H1 (cell line): ENCODE measurements at regions of chr10 and their contacts with region 1.

Region 1: GRCh38 chr10:119439922-119440321 is 102.6 kb downstream of the RGS10 start:
- DNase-seq: no peak
- H3K4me3 ChIP-seq: no peak overlapping the region
- H3K27ac ChIP-seq: no peak overlapping the region
- H3K4me1 ChIP-seq: no peaks in the 10 kb centered on the region; a peak in 1 of 7 replicates
- H3K27me3 ChIP-seq: no peaks in the 10 kb centered on the region
- CTCF ChIP-seq: no peak
- EP300 ChIP-seq: no peak
- POLR2A ChIP-seq: no peak
- RAD21 ChIP-seq: no peak

Region 2: DNA sequence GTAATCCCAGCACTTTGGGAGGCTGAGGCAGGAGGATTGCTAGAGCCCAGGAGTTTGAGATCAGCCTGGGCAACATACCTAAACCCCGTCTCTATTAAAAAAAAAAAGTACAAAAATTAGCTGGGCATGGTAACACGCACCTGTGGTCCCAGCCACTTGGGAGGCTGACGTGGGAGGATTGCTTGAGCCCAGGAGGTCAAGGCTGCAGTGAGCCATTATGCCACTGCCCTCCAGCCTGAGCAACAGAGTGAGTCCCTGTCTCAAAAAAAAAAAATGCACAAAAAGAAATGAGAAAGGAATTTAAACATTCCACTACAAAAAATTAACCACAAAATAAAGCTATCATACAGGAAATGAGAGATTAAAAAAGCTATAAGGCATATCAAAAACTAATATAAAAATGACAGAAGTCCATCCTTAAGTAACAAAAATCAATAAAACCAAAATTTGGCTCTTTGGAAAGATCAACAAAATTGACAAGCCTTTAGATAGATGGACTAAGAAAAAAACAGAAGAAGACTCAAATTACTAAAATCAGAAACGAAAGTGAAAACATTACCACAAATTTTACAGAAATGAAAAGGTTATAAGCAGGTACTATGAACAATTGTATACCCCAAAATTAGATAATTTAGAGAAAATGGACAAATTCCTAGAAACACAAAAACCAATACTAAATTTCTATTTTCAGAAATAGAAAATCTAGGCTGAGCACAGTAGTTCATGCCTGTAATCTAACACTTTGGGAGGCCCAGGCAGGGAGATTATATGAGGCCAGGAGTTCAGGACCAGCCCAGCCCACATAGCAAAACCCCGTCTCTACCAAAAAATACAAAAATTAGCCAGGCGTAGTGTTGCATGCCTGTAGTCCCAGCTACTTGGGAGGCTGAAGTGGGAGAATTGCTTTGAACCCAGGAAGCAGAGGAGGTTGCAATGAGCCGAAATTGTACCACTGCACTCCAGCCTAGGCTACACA is 452.8 kb before region 1 on chr10:
- CTCF ChIA-PET with region 1: no interaction called
- POLR2A ChIA-PET with region 1: no interaction called
- DNase-seq: no peak
- H3K4me3 ChIP-seq: no peak overlapping the region
- H3K27ac ChIP-seq: no peak overlapping the region
- H3K4me1 ChIP-seq: peaks cover 0 to 3% (median 3%) of the 10 kb centered on the region in 4 experiments; a peak in 2 of 7 replicates
- H3K27me3 ChIP-seq: no peaks in the 10 kb centered on the region
- CTCF ChIP-seq: no peak
- EP300 ChIP-seq: no peak
- POLR2A ChIP-seq: no peak
- RAD21 ChIP-seq: no peak

Region 3: GRCh38 chr10:119421887-119422681 is 17.8 kb before region 1 on chr10:
- CTCF ChIA-PET with region 1: interaction called, 29 read pairs
- POLR2A ChIA-PET with region 1: no interaction called
- DNase-seq: no peak
- H3K4me3 ChIP-seq: no peak overlapping the region
- H3K27ac ChIP-seq: no peak overlapping the region
- H3K4me1 ChIP-seq: peaks cover 0 to 11% (median 7%) of the 10 kb centered on the region in 4 experiments; a peak in 6 of 7 replicates
- H3K27me3 ChIP-seq: no peaks in the 10 kb centered on the region
- CTCF ChIP-seq: no peak
- EP300 ChIP-seq: no peak
- POLR2A ChIP-seq: no peak
- RAD21 ChIP-seq: no peak